ENCODE measurements at regions of chr4 and their contacts with region 1.

Region 1: GRCh38 chr4:122716825-122717448 is 15.6 kb upstream of the BBS12 start:
- DNase-seq: no peak
- H3K4me3 ChIP-seq: no peak overlapping the region
- H3K27ac ChIP-seq: no peak overlapping the region
- H3K27me3 ChIP-seq: no peaks in the 10 kb centered on the region
- CTCF ChIP-seq: peak; percentile 97

Region 2: GRCh38 chr4:122577808-122578781 is 138.8 kb before region 1 on chr4:
- CTCF ChIA-PET with region 1: interaction called, 12 read pairs
- POLR2A ChIA-PET with region 1: no interaction called
- DNase-seq: no peak
- H3K4me3 ChIP-seq: no peak overlapping the region
- H3K27ac ChIP-seq: no peak overlapping the region
- H3K27me3 ChIP-seq: peaks cover 3% of the 10 kb centered on the region
- CTCF ChIP-seq: peak; percentile 76

Region 3: DNA sequence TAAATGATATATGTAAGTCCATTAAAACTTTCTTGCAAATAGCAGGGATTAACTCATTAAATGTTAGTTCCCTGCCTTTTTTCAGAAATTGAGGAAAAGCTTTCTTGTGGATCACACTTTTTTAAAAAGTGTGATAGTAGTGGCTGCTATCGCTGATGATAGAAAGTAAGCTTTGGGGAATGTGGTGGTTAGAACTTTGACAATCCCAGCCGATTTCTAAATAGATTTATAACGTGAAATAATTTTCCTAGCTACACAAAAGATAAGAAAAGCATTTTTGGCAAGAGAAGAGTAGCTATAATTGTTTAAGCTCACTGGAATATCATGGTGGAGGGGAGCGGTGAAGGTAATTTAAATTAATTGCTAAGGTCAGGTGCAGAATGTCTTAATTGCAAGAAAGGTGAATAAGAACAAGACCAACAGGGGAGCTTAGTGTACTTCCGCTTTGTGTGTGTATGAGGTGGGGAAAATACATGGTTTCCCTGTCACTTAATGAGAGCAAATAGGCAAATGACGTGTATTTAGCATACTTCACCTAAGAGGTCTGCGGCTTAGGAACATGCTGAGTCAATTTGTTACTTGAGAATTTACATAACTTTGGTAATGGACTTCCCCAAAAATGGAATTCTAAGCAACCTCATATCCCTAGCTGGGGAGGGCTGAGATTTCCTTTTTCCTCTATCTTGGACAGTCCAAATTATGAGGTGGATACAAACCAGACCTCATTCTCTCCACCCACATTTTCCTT is 84.4 kb before region 1 on chr4:
- CTCF ChIA-PET with region 1: interaction called, 11 read pairs
- POLR2A ChIA-PET with region 1: no interaction called
- DNase-seq: no peak
- H3K4me3 ChIP-seq: no peak overlapping the region
- H3K27ac ChIP-seq: no peak overlapping the region
- H3K27me3 ChIP-seq: peaks cover 16% of the 10 kb centered on the region
- CTCF ChIP-seq: no peak

Region 4: DNA sequence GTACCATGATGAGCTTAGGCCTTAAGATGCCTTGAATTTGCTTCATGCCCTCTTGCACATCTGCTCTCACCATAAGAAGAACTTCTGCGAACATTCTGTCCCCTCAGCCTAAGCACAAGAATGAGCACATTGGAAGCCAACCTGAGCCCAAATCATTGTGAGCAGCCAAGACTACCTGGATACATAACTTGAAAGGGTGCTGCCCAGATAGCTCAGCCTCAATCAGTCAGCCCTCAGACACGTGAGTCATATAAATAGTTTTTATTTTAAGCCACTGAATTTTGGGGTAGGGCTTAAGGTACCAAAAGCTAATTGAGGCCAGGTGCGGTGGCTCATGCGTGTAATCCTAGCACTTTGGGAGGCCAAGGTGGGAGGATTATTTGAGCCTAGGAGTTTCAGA is 11.9 kb before region 1 on chr4:
- CTCF ChIA-PET with region 1: interaction called, 25 read pairs
- POLR2A ChIA-PET with region 1: no interaction called
- DNase-seq: no peak
- H3K4me3 ChIP-seq: no peak overlapping the region
- H3K27ac ChIP-seq: no peak overlapping the region
- H3K27me3 ChIP-seq: no peaks in the 10 kb centered on the region
- CTCF ChIP-seq: no peak

Region 5: GRCh38 chr4:122922877-122923511 is 206.1 kb after region 1 on chr4:
- CTCF ChIA-PET with region 1: interaction called, 26 read pairs
- POLR2A ChIA-PET with region 1: no interaction called
- DNase-seq: peak; percentile 57
- H3K4me3 ChIP-seq: peak overlapping the region; percentile 89
- H3K27ac ChIP-seq: peak overlapping the region; percentile 68
- H3K27me3 ChIP-seq: no peaks in the 10 kb centered on the region
- CTCF ChIP-seq: no peak

Measured in AG04450 (cell line).